Motor neuron (in vitro differentiated cells): ENCODE measurements at regions of chr20 and their contacts with region 1.

Region 1: GRCh38 chr20:63864847-63865640 is at the start of gene TPD52L2:
- ATAC-seq: peak; percentile 87 to 95 (median 92)
- H3K4me3 ChIP-seq: peak within 1 kb of the TSS; percentile 73 to 93 (median 89)
- H3K27ac ChIP-seq: peak within 1 kb of the TSS; percentile 82 to 90
- H3K4me1 ChIP-seq: peaks cover 12 to 16% of the 10 kb centered on the region in 2 donors
- total RNA-seq, gene TPD52L2: 41.3 to 108 (median 70.4) TPM

Region 2: DNA sequence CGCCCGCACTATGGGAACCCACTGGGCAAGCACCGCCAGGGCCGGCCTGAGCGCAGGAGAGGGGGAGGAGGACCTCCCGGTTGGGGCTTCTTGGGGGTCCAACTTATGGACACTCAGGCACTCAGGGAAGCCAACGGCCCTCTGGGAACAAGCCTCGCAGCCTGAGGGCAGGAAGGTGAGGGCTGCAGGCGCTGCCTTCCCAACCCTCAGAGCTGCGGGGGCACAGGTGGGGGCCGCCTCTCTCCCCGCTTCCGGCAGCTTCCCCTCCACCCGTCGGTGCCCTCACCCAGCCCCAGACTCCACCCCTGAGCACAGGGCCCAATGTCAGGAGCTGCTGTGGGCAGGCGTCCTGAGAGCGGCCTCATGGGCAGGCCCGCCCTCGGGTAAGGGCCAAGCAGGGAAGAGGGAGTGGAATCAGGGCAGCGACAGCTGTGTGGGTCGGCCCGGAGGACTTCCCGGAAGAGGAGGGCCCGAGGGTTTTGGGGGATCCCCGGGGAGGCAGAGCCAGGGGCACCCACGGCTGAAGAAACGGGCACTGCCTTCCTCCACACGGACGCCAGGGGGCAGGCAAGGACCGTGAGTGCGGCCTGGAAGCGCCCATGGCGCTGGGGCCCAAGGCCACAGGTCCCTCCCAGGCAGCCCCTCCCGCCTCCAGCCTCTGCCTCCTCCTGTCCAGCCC is 327.4 kb before region 1 on chr20:
- in situ Hi-C with region 1: loop called in 1 of 9 experiments (anchors 25 kb)
- ATAC-seq: peak; percentile 58 to 92 (median 70)
- H3K4me3 ChIP-seq: peak overlapping the region in 2 of 5 donors; percentile 7 to 12
- H3K27ac ChIP-seq: no peak overlapping the region
- H3K4me1 ChIP-seq: peaks cover 18 to 21% of the 10 kb centered on the region in 2 donors

Region 3: GRCh38 chr20:63625859-63626423 is 239.1 kb before region 1 on chr20:
- in situ Hi-C with region 1: no loop called
- ATAC-seq: no peak
- H3K4me3 ChIP-seq: peak overlapping the region; percentile 81 to 95 (median 89)
- H3K27ac ChIP-seq: peak overlapping the region; percentile 99
- H3K4me1 ChIP-seq: peaks cover 10 to 22% of the 10 kb centered on the region in 2 donors

Region 4: DNA sequence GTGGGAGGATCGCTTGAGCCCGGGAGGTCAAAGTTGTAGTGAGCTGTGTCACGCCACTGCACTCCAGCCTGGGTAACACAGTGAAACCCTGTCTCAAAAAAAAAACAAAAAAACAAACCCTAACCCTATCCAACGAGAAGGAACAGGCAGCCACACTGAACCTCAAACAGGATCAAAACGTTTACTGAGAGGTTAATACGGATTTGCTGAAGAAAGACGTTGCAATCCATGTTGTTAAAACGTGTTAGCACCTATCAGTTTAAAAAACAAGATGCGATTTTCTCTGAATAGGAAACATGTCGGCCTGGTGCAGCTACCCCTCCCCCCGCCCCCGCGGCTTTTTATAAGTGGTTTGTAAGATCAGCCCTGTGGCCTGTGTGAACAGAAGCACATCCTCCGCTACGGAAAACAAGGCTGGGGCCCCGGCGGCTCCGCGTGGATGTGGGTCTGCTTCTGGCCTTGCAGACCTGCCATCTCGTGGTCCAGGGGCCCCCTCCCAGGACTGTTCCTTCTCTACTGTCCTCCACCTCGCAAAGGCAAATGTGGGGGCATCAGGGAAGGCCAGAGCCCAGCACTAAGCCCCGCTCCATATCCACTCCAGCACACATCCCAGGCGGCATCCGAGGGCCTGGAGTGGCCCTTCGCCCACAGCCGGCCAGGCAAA is 114.1 kb before region 1 on chr20:
- in situ Hi-C with region 1: loop called in 1 of 9 experiments (anchors 25 kb)
- ATAC-seq: no peak
- H3K4me3 ChIP-seq: no peak overlapping the region
- H3K27ac ChIP-seq: peak overlapping the region in 1 of 2 donors; percentile 47
- H3K4me1 ChIP-seq: peaks cover 0 to 4% of the 10 kb centered on the region in 2 donors